T-cell (primary cell): ENCODE measurements at regions of chr4 and their contacts with region 1.

Region 1: DNA sequence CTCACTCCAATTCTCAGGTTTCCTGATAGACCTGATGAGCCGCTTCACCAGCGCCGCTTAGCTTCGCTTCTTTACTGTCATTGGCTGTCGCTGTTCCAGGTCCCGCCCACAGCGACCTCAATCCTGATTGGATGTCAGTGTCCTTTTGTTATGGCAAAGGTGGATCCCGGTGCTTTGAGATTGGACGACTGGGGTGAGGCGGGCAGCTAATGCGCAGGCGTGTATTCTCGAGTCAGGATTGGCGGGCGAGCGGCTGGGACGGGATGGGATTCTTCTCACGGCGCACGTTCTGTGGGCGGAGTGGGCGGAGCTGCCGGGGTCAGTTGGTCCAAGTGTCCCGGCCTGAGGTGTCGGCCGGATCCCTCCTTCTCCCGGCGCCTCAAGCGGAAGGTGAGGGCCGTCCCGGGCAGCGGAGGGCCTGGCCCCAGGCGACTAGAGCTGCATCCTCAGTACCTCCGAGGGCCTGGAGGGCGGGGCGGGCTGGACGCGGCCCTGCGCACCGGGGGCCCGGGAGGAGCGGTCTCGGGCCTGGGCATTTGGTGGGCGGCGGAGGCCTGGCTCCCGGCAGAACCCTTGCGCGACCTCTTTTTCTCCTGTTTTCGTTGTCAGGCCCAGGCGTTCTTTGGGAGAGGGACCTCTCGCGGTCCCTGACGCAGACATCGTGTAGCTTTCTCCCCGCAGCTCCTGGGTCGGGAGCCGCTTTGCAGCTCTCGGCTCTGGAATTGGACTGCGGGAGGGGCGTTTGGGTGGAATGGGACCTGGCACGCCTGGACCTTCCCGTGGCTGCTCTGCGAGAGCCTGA is at the start of gene SCOC:
- DNase-seq: peak; percentile 87 to 98 (median 96)
- ATAC-seq: peak; percentile 95 to 97 (median 96)
- H3K4me3 ChIP-seq: peak within 1 kb of the TSS; percentile 67 to 88
- H3K4me3 Mint-ChIP-seq: no peak within 1 kb of the TSS
- H3K27ac ChIP-seq: peak within 1 kb of the TSS; percentile 85
- H3K27ac Mint-ChIP-seq: peak within 1 kb of the TSS; percentile 77 to 84
- H3K4me1 ChIP-seq: peaks cover 7 to 13% of the 10 kb centered on the region in 2 experiments
- H3K4me1 Mint-ChIP-seq: peaks cover 38 to 49% (median 43%) of the 10 kb centered on the region in 3 donors
- H3K27me3 ChIP-seq: no peaks in the 10 kb centered on the region
- H3K27me3 Mint-ChIP-seq: no peaks in the 10 kb centered on the region
- total RNA-seq, gene SCOC: 10.3 to 19.3 (median 18.7) TPM

Region 2: GRCh38 chr4:140353786-140354185 is 19.7 kb before region 1 on chr4:
- CTCF ChIA-PET with region 1: interaction called, 16 to 58 read pairs
- POLR2A ChIA-PET with region 1: interaction called in 1 of 2 experiments, 3 read pairs
- DNase-seq: peak in 2 of 35 experiments; percentile 14 to 31
- ATAC-seq: peak in 2 of 4 experiments; percentile 53 to 83
- H3K4me3 ChIP-seq: no peak overlapping the region
- H3K4me3 Mint-ChIP-seq: peak overlapping the region in 1 of 3 donors; percentile 56
- H3K27ac ChIP-seq: no peak overlapping the region
- H3K27ac Mint-ChIP-seq: peak overlapping the region; percentile 90 to 92
- H3K4me1 ChIP-seq: peaks cover 10 to 15% of the 10 kb centered on the region in 2 experiments
- H3K4me1 Mint-ChIP-seq: peaks cover 11 to 23% (median 18%) of the 10 kb centered on the region in 3 donors
- H3K27me3 ChIP-seq: no peaks in the 10 kb centered on the region
- H3K27me3 Mint-ChIP-seq: peaks cover 0 to 10% of the 10 kb centered on the region in 2 donors

Region 3: DNA sequence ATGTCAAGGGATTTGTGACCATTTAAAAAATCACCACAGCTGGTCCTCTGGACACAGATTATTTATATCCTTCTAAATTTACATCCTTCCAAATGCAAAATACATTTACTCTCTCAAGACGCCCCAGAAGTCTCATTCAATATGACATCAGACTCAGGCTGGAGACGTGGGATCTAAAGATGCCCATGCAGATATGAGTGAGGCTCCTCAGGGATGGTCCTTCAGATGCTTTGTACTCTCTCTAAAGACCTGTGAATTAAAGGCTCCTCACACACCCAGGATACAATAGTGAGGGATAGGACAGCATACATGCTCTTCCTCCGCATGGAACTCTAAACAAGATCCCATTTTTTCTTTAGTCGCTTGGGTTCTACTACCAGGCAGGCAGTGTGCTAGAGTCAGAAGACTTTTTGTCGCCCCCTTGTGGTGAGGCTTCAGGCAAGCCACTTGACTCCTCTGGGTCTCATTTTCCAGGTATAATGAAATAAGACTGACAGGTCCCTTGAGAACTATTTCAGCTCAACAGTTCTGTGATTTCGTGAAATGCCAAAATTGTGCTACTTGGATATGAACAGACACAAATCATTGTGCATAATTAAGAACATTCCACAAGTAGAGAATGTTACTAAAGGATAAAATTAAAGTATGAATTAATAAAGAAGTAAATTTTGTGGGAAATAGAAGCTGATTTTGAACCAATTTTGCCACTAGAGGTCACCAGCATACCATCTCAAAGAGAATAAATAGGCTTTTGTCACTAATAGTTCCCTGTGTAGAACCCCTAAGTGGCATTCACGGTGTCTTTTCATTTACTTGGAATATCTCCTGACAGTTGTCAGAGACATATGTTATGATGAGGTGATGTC is 13.7 kb before region 1 on chr4:
- CTCF ChIA-PET with region 1: interaction called, 16 to 58 read pairs
- POLR2A ChIA-PET with region 1: interaction called in 1 of 2 experiments, 8 read pairs
- DNase-seq: peak; percentile 34 to 87 (median 66)
- ATAC-seq: peak; percentile 83 to 97 (median 90)
- H3K4me3 ChIP-seq: no peak overlapping the region
- H3K4me3 Mint-ChIP-seq: no peak overlapping the region
- H3K27ac ChIP-seq: no peak overlapping the region
- H3K27ac Mint-ChIP-seq: no peak overlapping the region
- H3K4me1 ChIP-seq: no peaks in the 10 kb centered on the region
- H3K4me1 Mint-ChIP-seq: peaks cover 4 to 5% (median 4%) of the 10 kb centered on the region in 3 donors
- H3K27me3 ChIP-seq: peaks cover 0 to 3% of the 10 kb centered on the region in 2 experiments
- H3K27me3 Mint-ChIP-seq: no peaks in the 10 kb centered on the region

Region 4: DNA sequence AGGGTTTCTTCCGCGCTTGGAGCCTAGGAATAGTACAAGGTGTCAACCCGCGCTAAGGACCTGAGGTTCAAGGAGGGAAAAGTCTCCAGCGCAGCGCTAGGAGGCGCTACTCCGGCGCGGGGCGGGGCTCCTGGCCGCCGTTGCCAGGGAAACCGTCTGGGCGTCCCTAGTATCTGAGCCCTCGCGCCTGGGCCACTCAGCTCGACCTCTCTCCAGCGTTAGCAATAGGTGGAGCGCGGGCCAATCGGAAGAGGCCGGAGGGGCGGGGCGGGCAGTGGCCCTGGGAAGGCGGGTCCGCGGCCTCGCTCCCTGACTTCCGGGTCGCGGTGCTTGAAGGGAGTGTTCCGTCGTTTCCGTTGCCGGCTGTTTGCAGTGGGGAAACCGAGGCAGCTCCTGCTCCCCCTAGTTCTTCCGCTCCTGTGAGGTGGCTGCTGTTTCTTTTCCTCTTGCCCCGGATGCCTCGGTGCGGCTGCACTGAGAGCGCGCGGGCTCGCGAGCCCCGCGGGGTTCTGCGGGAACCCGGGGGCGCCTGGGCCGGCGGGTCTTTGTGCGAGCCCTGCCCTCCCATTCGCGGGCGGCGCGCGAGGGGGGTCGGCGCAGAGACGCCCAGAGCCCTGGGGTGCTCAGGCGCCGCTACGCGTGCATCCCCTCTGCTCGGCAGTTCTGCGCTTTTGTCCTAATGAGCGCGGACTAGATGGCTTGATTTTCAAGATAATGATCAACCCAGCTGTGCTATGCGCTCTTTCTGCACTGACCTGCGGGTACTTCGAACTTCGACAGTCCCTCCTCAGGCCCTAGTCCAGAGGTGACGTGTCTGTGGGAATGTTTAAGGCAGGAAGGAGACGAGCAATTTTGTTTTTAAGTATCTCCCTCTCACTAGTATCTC is 150.6 kb after region 1 on chr4 and contains the start of gene ELMOD2:
- CTCF ChIA-PET with region 1: interaction called in 1 of 2 experiments, 13 read pairs
- POLR2A ChIA-PET with region 1: interaction called in 1 of 2 experiments, 4 read pairs
- DNase-seq: peak; percentile 91 to 99 (median 97)
- ATAC-seq: peak; percentile 98 to 100 (median 100)
- H3K4me3 ChIP-seq: peak within 1 kb of the TSS; percentile 80 to 86
- H3K4me3 Mint-ChIP-seq: peak within 1 kb of the TSS; percentile 81 to 84 (median 84)
- H3K27ac ChIP-seq: peak within 1 kb of the TSS; percentile 52
- H3K27ac Mint-ChIP-seq: peak within 1 kb of the TSS; percentile 68 to 86
- H3K4me1 ChIP-seq: peaks cover 11 to 12% of the 10 kb centered on the region in 2 experiments
- H3K4me1 Mint-ChIP-seq: peaks cover 23 to 33% (median 30%) of the 10 kb centered on the region in 3 donors
- H3K27me3 ChIP-seq: no peaks in the 10 kb centered on the region
- H3K27me3 Mint-ChIP-seq: no peaks in the 10 kb centered on the region
- total RNA-seq, gene ELMOD2: 11.1 to 22.8 (median 18.8) TPM

Region 5: DNA sequence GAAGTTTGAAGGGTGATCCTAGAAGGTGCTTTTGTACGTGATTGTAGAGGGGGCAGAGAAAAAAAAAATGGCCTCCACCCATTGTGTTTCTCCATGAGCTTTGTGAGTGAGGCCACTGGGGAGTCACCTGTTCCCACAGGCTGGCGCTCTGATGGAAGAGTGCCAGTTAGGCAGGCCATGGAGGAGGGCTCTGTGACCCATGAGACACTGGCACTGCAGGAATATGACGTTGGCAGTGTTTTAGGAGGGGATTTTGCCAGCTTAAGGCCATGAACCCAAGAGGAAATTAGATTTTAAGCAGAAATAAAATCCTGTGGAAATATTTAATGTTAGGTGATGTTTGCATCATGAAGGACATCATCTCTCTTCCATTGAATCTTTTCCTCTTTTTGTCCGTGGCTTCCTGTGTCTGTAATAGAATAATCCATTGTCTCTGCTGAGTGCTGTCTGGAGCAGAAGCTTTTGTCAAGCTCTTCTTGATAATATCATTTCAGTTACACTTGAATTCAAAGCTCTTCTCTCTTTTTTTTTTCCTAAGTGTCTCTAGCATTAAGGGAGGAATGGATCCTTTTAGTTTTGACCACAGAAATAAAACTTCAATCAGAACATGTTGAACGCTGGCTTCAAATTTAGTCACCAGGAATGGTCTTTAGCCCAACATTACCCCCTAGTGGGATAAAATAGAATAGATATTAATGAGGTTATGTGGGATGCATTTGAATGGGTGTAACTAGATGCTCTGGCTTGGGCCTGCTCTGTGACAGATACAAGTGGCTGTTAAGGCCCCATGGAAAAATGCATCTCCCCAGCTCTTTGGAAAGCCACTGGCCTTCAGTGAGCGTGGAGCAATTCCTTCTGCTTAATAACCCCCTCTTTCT is 236.3 kb after region 1 on chr4:
- CTCF ChIA-PET with region 1: no interaction called
- POLR2A ChIA-PET with region 1: interaction called in 1 of 2 experiments, 10 read pairs
- DNase-seq: peak in 1 of 35 experiments; percentile 48
- ATAC-seq: peak in 2 of 4 experiments; percentile 30 to 48
- H3K4me3 ChIP-seq: no peak overlapping the region
- H3K4me3 Mint-ChIP-seq: no peak overlapping the region
- H3K27ac ChIP-seq: no peak overlapping the region
- H3K27ac Mint-ChIP-seq: no peak overlapping the region
- H3K4me1 ChIP-seq: no peaks in the 10 kb centered on the region
- H3K4me1 Mint-ChIP-seq: no peaks in the 10 kb centered on the region
- H3K27me3 ChIP-seq: peaks cover 0 to 6% of the 10 kb centered on the region in 2 experiments
- H3K27me3 Mint-ChIP-seq: peaks cover 5 to 19% of the 10 kb centered on the region in 2 donors